ENCODE measurements at regions of chr3 and their contacts with region 1.

Region 1: DNA sequence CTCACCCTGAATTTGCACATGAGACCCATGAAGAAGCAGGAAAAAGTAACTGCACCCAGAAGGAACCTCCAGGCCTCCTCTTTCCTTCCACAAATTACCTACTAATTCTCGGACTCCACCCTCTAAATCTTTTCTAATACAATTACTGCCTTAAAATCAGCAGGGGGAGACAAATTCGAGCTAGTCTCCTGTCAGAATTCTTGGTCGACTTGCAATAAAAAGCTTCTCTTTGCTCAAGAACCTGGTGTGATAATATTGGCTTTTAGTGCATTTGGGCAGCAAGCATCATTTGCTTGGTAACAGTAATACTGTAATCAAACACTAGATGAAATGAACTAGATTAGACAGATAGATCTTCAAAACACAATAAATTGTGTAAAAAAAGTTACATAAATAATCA is 281.9 kb downstream of the RAP2B start:
- DNase-seq: peak in 1 of 2 experiments; percentile 15
- H3K4me3 ChIP-seq: no peak overlapping the region
- H3K4me3 Mint-ChIP-seq: no peak overlapping the region
- H3K27ac Mint-ChIP-seq: no peak overlapping the region
- H3K4me1 ChIP-seq: no peaks in the 10 kb centered on the region
- H3K4me1 Mint-ChIP-seq: peaks cover 5% of the 10 kb centered on the region
- H3K27me3 ChIP-seq: no peaks in the 10 kb centered on the region
- H3K27me3 Mint-ChIP-seq: no peaks in the 10 kb centered on the region
- CTCF ChIP-seq: peak; percentile 20 to 33

Region 2: GRCh38 chr3:153043729-153044328 is 400.1 kb before region 1 on chr3:
- CTCF ChIA-PET with region 1: interaction called, 7 read pairs
- POLR2A ChIA-PET with region 1: no interaction called
- intact Hi-C with region 1: loop called (anchors 2 kb)
- DNase-seq: no peak
- H3K4me3 ChIP-seq: no peak overlapping the region
- H3K4me3 Mint-ChIP-seq: peak overlapping the region; percentile 39
- H3K27ac Mint-ChIP-seq: peak overlapping the region; percentile 34
- H3K4me1 ChIP-seq: no peaks in the 10 kb centered on the region
- H3K4me1 Mint-ChIP-seq: peaks cover 6% of the 10 kb centered on the region
- H3K27me3 ChIP-seq: no peaks in the 10 kb centered on the region
- H3K27me3 Mint-ChIP-seq: no peaks in the 10 kb centered on the region
- CTCF ChIP-seq: no peak